Panc1 (cell line): ENCODE measurements at regions of chrX and their contacts with region 1.

Region 1: GRCh38 chrX:73758250-73758649 is 195.3 kb downstream of the CHIC1 start:
- DNase-seq: no peak
- ATAC-seq: no peak
- H3K4me3 ChIP-seq: no peak overlapping the region
- H3K27ac ChIP-seq: no peak overlapping the region
- H3K4me1 ChIP-seq: no peaks in the 10 kb centered on the region
- H3K27me3 ChIP-seq: no peaks in the 10 kb centered on the region
- CTCF ChIP-seq: no peak

Region 2: GRCh38 chrX:73206366-73206765 is 551.9 kb before region 1 on chrX:
- CTCF ChIA-PET with region 1: no interaction called
- POLR2A ChIA-PET with region 1: interaction called, 11 read pairs
- in situ Hi-C with region 1: no loop called
- intact Hi-C with region 1: no loop called
- DNase-seq: no peak
- ATAC-seq: no peak
- H3K4me3 ChIP-seq: no peak overlapping the region
- H3K27ac ChIP-seq: no peak overlapping the region
- H3K4me1 ChIP-seq: no peaks in the 10 kb centered on the region
- H3K27me3 ChIP-seq: no peaks in the 10 kb centered on the region
- CTCF ChIP-seq: no peak

Region 3: DNA sequence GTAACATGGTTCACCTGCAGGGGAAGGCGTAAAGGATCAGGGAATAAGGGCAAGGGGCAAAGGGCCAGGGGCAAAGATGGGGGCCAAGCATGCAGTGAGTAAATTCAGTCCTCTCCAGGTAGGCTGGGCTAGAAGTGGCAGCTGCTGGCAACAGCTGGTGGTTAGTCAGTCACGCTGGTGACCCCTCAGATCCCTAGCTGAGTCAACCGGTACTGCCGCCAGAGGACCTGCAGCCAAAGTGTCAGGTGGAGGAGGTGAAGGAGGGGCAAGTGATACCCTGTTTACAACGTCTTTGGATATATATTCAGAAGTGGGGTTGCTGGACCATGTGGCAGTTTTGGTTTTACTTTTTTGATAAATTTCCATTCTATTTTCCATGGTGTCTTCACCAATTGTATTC is 519.0 kb before region 1 on chrX:
- CTCF ChIA-PET with region 1: no interaction called
- POLR2A ChIA-PET with region 1: no interaction called
- in situ Hi-C with region 1: no loop called
- intact Hi-C with region 1: no loop called
- DNase-seq: no peak
- ATAC-seq: no peak
- H3K4me3 ChIP-seq: no peak overlapping the region
- H3K27ac ChIP-seq: no peak overlapping the region
- H3K4me1 ChIP-seq: no peaks in the 10 kb centered on the region
- H3K27me3 ChIP-seq: no peaks in the 10 kb centered on the region
- CTCF ChIP-seq: no peak